ENCODE measurements at regions of chr13 and their contacts with region 1.

Region 1: DNA sequence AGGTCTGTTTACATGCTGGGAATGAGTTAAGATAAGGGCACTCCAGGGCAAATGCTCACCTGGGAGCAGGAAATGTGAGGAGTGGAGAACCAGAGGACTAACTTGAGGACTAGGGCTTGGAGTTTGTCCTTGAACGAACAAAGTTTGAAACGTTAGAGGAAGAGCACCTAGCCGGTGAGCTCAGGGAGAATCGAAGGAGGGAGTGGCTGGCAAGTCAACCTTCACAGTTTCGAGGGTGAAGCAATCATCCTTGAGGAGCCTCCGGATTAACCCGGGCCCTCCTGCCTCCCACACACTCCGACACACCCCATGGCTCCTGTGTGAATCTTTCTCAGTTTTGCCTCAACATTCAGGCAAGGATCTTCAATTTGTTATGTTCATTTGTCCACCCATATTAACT is 58.6 kb downstream of the LMO7 start:
- DNase-seq: no peak
- H3K4me3 ChIP-seq: no peak overlapping the region
- H3K27ac ChIP-seq: no peak overlapping the region
- H3K4me1 ChIP-seq: peaks cover 0 to 3% (median 0%) of the 10 kb centered on the region in 4 experiments
- H3K27me3 ChIP-seq: no peaks in the 10 kb centered on the region

Region 2: GRCh38 chr13:75705395-75705794 is 10.7 kb after region 1 on chr13:
- CTCF ChIA-PET with region 1: interaction called, 11 read pairs
- POLR2A ChIA-PET with region 1: no interaction called
- DNase-seq: no peak
- H3K4me3 ChIP-seq: no peak overlapping the region
- H3K27ac ChIP-seq: no peak overlapping the region
- H3K4me1 ChIP-seq: peaks cover 0 to 10% (median 0%) of the 10 kb centered on the region in 4 experiments
- H3K27me3 ChIP-seq: no peaks in the 10 kb centered on the region

Region 3: GRCh38 chr13:75798353-75799255 is 103.9 kb after region 1 on chr13:
- CTCF ChIA-PET with region 1: interaction called, 16 read pairs
- POLR2A ChIA-PET with region 1: no interaction called
- DNase-seq: no peak
- H3K4me3 ChIP-seq: no peak overlapping the region
- H3K27ac ChIP-seq: no peak overlapping the region
- H3K4me1 ChIP-seq: peaks cover 0 to 14% (median 6%) of the 10 kb centered on the region in 4 experiments
- H3K27me3 ChIP-seq: no peaks in the 10 kb centered on the region

Region 4: GRCh38 chr13:76461999-76462398 is 767.3 kb after region 1 on chr13:
- CTCF ChIA-PET with region 1: interaction called, 10 read pairs
- POLR2A ChIA-PET with region 1: no interaction called
- DNase-seq: peak in 2 of 3 donors; percentile 18 to 43
- H3K4me3 ChIP-seq: no peak overlapping the region
- H3K27ac ChIP-seq: no peak overlapping the region
- H3K4me1 ChIP-seq: peaks cover 0 to 26% (median 8%) of the 10 kb centered on the region in 4 experiments
- H3K27me3 ChIP-seq: no peaks in the 10 kb centered on the region

Measured in common myeloid progenitor, CD34-positive (primary cell).